GM12878 (cell line): ENCODE measurements at regions of chr2 and their contacts with region 1.

Region 1: DNA sequence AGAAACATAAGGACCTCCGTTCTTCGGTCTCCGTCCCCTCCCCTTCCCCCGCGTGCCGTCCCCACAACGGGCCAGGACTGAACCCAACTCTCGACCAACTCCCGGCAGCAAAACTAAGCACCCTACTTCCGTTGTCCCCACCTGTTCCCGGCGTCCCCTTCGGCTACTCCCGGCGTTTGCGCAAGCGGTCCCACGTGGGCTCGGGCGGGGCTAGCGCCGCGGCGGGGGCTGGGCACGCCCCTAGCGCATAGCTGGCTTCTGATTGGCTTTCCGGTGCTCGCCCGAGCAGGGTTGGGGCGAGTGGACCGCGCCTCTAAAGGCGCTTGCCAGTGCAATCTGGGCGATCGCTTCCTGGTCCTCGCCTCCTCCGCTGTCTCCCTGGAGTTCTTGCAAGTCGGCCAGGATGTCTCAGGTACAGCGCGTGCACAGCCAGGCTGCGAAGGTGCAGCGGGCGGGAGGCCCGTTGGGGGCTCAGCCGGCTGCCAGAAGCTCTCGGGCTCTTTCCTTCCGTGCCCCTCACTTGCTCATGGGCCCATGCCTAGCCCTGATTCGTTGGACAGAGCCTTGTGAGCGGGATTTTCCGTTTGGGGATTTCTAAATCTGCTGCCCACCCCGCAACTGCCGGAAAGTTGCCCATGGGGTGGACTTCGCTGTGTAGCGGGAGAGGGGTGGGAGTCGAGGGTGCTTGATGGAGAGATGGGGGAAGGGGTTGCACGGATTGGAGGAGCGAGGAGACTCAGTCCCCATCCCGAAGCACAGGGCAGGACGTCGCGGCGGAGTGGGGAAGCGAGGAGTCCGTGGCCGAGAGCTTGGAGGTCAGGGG is at the starts of genes C2orf76 and DBI:
- DNase-seq: peak; percentile 90
- ATAC-seq: peak; percentile 94
- H3K4me3 ChIP-seq: peak within 1 kb of the TSS; percentile 89
- H3K27ac ChIP-seq: peak within 1 kb of the TSS; percentile 92
- H3K4me1 ChIP-seq: peaks cover 21% of the 10 kb centered on the region
- H3K27me3 ChIP-seq: no peaks in the 10 kb centered on the region
- CTCF ChIP-seq: no peak
- EP300 ChIP-seq: no peak; a peak in 1 of 4 replicates
- POLR2A ChIP-seq: peak; percentile 95
- RAD21 ChIP-seq: no peak
- polyA plus RNA-seq, gene C2orf76: 45.0 to 46.1 TPM
- polyA plus RNA-seq, gene DBI: 2,131 to 2,567 TPM

Region 2: DNA sequence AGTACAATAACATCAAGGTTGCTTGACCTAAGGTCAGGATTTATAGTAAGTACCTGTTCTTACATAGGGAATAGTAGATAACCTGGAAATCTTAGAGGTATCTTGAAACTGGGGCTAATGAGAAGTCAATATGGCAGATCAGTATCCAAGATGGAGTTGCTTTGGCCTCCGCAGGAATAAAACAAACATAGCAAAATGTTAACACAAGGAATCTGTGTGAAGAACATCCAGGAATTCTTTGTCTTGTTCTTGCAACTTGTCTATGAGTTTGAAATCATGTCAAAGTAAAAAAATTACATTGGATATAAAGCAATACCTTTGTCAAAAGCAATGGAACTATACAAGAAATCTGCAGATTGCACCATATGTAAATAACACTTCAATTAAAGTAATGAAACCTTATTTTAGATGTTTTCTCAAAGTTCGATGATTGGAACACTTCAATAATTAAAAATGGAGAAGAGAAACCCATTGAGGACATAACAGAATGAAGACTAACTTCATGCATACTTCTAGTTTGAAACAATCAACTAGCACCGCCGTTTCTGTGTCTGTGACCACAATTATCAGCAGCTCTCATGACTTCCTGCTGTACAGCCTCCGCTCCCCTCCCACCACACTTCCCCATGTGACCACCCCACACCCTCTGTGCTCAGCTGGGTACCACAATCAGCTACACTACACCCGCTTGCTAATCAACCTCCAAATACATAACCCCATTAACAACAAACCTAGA is 27.9 kb before region 1 on chr2:
- CTCF ChIA-PET with region 1: interaction called, 5 read pairs
- POLR2A ChIA-PET with region 1: interaction called, 5 read pairs
- RAD21 ChIA-PET with region 1: interaction called, 5 read pairs
- SMC1A ChIA-PET with region 1: interaction called, 10 read pairs
- in situ Hi-C with region 1: no loop called
- intact Hi-C with region 1: no loop called
- DNase-seq: peak; percentile 48
- ATAC-seq: peak; percentile 100
- H3K4me3 ChIP-seq: no peak overlapping the region
- H3K27ac ChIP-seq: peak overlapping the region; percentile 26; the same call in 1 of the 2 replicates
- H3K4me1 ChIP-seq: peaks cover 17% of the 10 kb centered on the region
- H3K27me3 ChIP-seq: no peaks in the 10 kb centered on the region
- CTCF ChIP-seq: no peak
- EP300 ChIP-seq: peak in 1 of 2 experiments; percentile 48; a peak in 2 of 4 replicates
- POLR2A ChIP-seq: peak; percentile 54
- RAD21 ChIP-seq: no peak

Region 3: DNA sequence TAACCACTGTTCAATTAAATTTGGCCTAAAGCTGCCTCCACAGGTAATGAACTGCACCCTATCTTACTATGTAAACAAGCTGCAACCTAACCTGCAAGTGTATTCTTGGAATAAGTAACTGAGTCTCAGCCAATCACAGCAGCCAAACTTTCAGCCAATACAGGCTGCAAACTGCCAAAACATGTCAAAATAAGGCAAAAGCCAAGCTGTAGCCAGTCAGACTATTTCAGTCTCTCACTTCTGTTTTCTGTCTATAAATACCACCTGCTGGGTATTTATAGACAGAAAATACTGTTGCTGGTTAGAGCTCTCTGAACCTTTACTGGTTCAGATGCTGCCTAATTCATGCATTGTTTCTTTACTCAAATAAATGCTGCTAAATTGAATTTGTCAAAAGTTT is 14.5 kb before region 1 on chr2:
- CTCF ChIA-PET with region 1: interaction called, 31 read pairs
- POLR2A ChIA-PET with region 1: interaction called, 138 read pairs
- RAD21 ChIA-PET with region 1: interaction called, 34 read pairs
- SMC1A ChIA-PET with region 1: interaction called, 120 read pairs
- in situ Hi-C with region 1: no loop called
- intact Hi-C with region 1: loop called (anchors 2 kb)
- DNase-seq: peak; percentile 93
- ATAC-seq: peak; percentile 95
- H3K4me3 ChIP-seq: no peak overlapping the region
- H3K27ac ChIP-seq: peak overlapping the region; percentile 91
- H3K4me1 ChIP-seq: peaks cover 38% of the 10 kb centered on the region
- H3K27me3 ChIP-seq: no peaks in the 10 kb centered on the region
- CTCF ChIP-seq: no peak
- EP300 ChIP-seq: peak; percentile 66 to 84
- POLR2A ChIP-seq: no peak
- RAD21 ChIP-seq: no peak; the same call in 1 of the 2 replicates

Region 4: GRCh38 chr2:119377294-119377999 is 10.6 kb after region 1 on chr2:
- CTCF ChIA-PET with region 1: interaction called, 4 read pairs
- POLR2A ChIA-PET with region 1: interaction called, 13 read pairs
- RAD21 ChIA-PET with region 1: interaction called, 4 read pairs
- SMC1A ChIA-PET with region 1: interaction called, 16 read pairs
- in situ Hi-C with region 1: no loop called
- intact Hi-C with region 1: no loop called
- DNase-seq: no peak
- ATAC-seq: peak; percentile 58
- H3K4me3 ChIP-seq: no peak overlapping the region
- H3K27ac ChIP-seq: no peak overlapping the region
- H3K4me1 ChIP-seq: no peaks in the 10 kb centered on the region
- H3K27me3 ChIP-seq: no peaks in the 10 kb centered on the region
- CTCF ChIP-seq: no peak
- EP300 ChIP-seq: no peak
- POLR2A ChIP-seq: no peak
- RAD21 ChIP-seq: no peak

Region 5: DNA sequence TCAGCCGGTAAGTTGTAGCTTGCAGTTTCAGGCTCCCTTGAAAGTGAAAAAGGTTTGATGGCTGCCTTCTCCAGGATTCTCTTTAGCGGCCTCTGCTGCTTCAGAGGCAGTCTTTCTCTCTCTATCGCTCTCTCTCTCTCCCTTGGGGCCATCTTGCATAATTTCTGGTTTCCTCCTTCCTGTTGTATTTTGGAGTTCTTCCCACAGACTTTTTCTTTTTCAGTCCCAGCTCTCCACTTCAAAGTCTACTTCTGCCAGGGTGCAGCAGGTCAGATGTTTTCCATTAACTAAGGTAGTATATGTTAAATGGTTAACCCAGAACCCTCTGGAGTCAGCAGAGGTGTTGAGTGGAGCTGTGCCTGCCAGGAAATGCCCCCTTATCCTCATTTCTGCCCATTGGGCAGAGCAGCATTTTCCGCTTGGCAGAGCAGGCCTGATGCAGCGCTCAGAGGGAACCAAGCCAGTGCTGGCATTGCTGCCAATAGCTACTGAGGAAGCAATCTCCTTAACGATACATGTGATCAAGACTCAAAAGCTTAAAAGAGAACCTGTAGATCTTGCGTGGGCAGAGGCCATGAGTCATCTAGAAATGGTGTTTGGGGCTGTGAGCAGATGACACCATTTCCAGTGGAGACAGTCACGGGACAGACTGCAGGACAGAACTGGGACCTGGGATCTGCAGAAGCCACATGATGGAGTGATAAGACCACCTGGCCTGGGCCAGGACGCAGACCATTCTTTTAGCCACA is 20.7 kb after region 1 on chr2:
- CTCF ChIA-PET with region 1: interaction called, 21 read pairs
- POLR2A ChIA-PET with region 1: interaction called, 31 read pairs
- RAD21 ChIA-PET with region 1: interaction called, 12 read pairs
- SMC1A ChIA-PET with region 1: interaction called, 7 read pairs
- in situ Hi-C with region 1: no loop called
- intact Hi-C with region 1: no loop called
- DNase-seq: peak; percentile 59
- ATAC-seq: peak; percentile 93
- H3K4me3 ChIP-seq: no peak overlapping the region
- H3K27ac ChIP-seq: peak overlapping the region; percentile 46
- H3K4me1 ChIP-seq: peaks cover 7% of the 10 kb centered on the region
- H3K27me3 ChIP-seq: no peaks in the 10 kb centered on the region
- CTCF ChIP-seq: peak; percentile 30 to 40 (median 32); a peak in 3 of 6 replicates
- EP300 ChIP-seq: peak in 1 of 2 experiments; percentile 32; a peak in 1 of 4 replicates
- POLR2A ChIP-seq: no peak
- RAD21 ChIP-seq: peak; percentile 44